CD8-positive, alpha-beta T cell (primary cell): ENCODE measurements at regions of chr1 and their contacts with region 1.

Region 1: GRCh38 chr1:6489799-6490180 is 1.7 kb downstream of the PLEKHG5 start:
- DNase-seq: peak; percentile 46 to 87 (median 76)
- ATAC-seq: peak; percentile 60
- H3K4me3 ChIP-seq: peak overlapping the region; percentile 69 to 94
- H3K4me3 Mint-ChIP-seq: peak overlapping the region; percentile 76
- H3K27ac ChIP-seq: no peak overlapping the region
- H3K27ac Mint-ChIP-seq: no peak overlapping the region
- H3K4me1 ChIP-seq: peaks cover 34% of the 10 kb centered on the region
- H3K4me1 Mint-ChIP-seq: peaks cover 23% of the 10 kb centered on the region
- H3K27me3 ChIP-seq: peaks cover 7 to 15% of the 10 kb centered on the region in 2 experiments
- H3K27me3 Mint-ChIP-seq: peaks cover 11% of the 10 kb centered on the region
- CTCF ChIP-seq: peak; percentile 99

Region 2: GRCh38 chr1:6423321-6423999 is 66.3 kb before region 1 on chr1:
- CTCF ChIA-PET with region 1: interaction called, 25 read pairs
- POLR2A ChIA-PET with region 1: no interaction called
- intact Hi-C with region 1: loop called (anchors 1 kb)
- DNase-seq: peak; percentile 49 to 83 (median 75)
- ATAC-seq: peak; percentile 84
- H3K4me3 ChIP-seq: peak overlapping the region; percentile 12 to 46
- H3K4me3 Mint-ChIP-seq: peak overlapping the region; percentile 72
- H3K27ac ChIP-seq: no peak overlapping the region
- H3K27ac Mint-ChIP-seq: no peak overlapping the region
- H3K4me1 ChIP-seq: peaks cover 33% of the 10 kb centered on the region
- H3K4me1 Mint-ChIP-seq: peaks cover 9% of the 10 kb centered on the region
- H3K27me3 ChIP-seq: peaks cover 26 to 53% of the 10 kb centered on the region in 2 experiments
- H3K27me3 Mint-ChIP-seq: peaks cover 37% of the 10 kb centered on the region
- CTCF ChIP-seq: peak; percentile 72

Region 3: DNA sequence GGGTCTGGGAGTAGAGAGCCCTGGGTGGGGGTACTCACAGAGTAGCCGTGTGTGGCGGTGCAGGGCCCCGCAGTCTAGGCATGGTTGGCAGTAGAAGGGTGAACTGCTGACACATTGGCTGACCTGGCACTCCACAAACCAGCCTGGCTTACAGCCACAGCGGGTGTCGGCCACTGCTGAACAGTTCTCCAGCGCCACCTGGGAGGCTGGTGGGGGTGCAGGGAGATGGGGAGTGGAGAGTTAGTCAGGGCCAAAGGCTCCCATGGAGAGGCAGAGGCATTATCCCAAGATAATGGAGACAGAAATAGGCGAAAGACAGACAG is 25.3 kb before region 1 on chr1:
- CTCF ChIA-PET with region 1: interaction called, 23 read pairs
- POLR2A ChIA-PET with region 1: interaction called, 6 read pairs
- intact Hi-C with region 1: loop called in 1 of 2 experiments (anchors 2 kb)
- DNase-seq: peak in 2 of 9 experiments; percentile 38 to 44
- ATAC-seq: no peak
- H3K4me3 ChIP-seq: peak overlapping the region; percentile 88 to 95
- H3K4me3 Mint-ChIP-seq: peak overlapping the region; percentile 91
- H3K27ac ChIP-seq: peak overlapping the region; percentile 72 to 87
- H3K27ac Mint-ChIP-seq: peak overlapping the region; percentile 95
- H3K4me1 ChIP-seq: peaks cover 52% of the 10 kb centered on the region
- H3K4me1 Mint-ChIP-seq: peaks cover 44% of the 10 kb centered on the region
- H3K27me3 ChIP-seq: no peaks in the 10 kb centered on the region
- H3K27me3 Mint-ChIP-seq: no peaks in the 10 kb centered on the region
- CTCF ChIP-seq: no peak

Region 4: DNA sequence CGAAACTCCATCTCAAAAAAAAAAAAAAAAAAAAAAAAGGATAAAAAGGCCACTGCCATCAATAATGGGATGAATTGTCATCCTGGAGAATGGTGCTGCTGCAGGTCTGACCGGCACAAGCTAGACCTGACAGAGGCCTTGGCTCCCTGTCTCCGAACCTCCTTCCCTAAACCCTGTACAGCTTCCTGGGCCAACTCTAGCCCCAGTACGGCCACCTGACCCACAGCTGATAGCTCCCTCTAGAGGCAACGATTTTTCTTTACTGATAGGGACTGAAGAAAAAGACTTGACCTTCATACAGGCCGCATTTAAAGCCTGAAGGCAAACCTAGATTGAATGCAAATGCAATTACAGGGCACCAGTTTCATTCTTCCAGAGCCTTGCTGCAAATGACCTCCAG is 33.8 kb after region 1 on chr1:
- CTCF ChIA-PET with region 1: interaction called, 8 read pairs
- POLR2A ChIA-PET with region 1: no interaction called
- intact Hi-C with region 1: loop called (anchors 1 kb)
- DNase-seq: peak in 1 of 9 experiments; percentile 22
- ATAC-seq: no peak
- H3K4me3 ChIP-seq: no peak overlapping the region
- H3K4me3 Mint-ChIP-seq: no peak overlapping the region
- H3K27ac ChIP-seq: no peak overlapping the region
- H3K27ac Mint-ChIP-seq: peak overlapping the region; percentile 19
- H3K4me1 ChIP-seq: no peaks in the 10 kb centered on the region
- H3K4me1 Mint-ChIP-seq: no peaks in the 10 kb centered on the region
- H3K27me3 ChIP-seq: no peaks in the 10 kb centered on the region
- H3K27me3 Mint-ChIP-seq: no peaks in the 10 kb centered on the region
- CTCF ChIP-seq: peak; percentile 27

Region 5: GRCh38 chr1:6547301-6547700 is 57.5 kb after region 1 on chr1:
- CTCF ChIA-PET with region 1: interaction called, 55 read pairs
- POLR2A ChIA-PET with region 1: interaction called, 4 read pairs
- intact Hi-C with region 1: loop called in 1 of 2 experiments (anchors 2 kb)
- DNase-seq: no peak
- ATAC-seq: no peak
- H3K4me3 ChIP-seq: no peak overlapping the region
- H3K4me3 Mint-ChIP-seq: no peak overlapping the region
- H3K27ac ChIP-seq: peak overlapping the region in 1 of 2 experiments; percentile 24
- H3K27ac Mint-ChIP-seq: peak overlapping the region; percentile 90
- H3K4me1 ChIP-seq: peaks cover 26% of the 10 kb centered on the region
- H3K4me1 Mint-ChIP-seq: peaks cover 34% of the 10 kb centered on the region
- H3K27me3 ChIP-seq: no peaks in the 10 kb centered on the region
- H3K27me3 Mint-ChIP-seq: no peaks in the 10 kb centered on the region
- CTCF ChIP-seq: no peak

Region 6: GRCh38 chr1:6646499-6647148 is 156.8 kb after region 1 on chr1:
- CTCF ChIA-PET with region 1: interaction called, 102 read pairs
- POLR2A ChIA-PET with region 1: interaction called, 3 read pairs
- intact Hi-C with region 1: loop called (anchors 1 kb)
- DNase-seq: peak in 6 of 9 experiments; percentile 8 to 69 (median 30)
- ATAC-seq: peak; percentile 74
- H3K4me3 ChIP-seq: no peak overlapping the region
- H3K4me3 Mint-ChIP-seq: no peak overlapping the region
- H3K27ac ChIP-seq: no peak overlapping the region
- H3K27ac Mint-ChIP-seq: no peak overlapping the region
- H3K4me1 ChIP-seq: no peaks in the 10 kb centered on the region
- H3K4me1 Mint-ChIP-seq: peaks cover 3% of the 10 kb centered on the region
- H3K27me3 ChIP-seq: no peaks in the 10 kb centered on the region
- H3K27me3 Mint-ChIP-seq: no peaks in the 10 kb centered on the region
- CTCF ChIP-seq: peak; percentile 64